Spleen (tissue), 13 donors: ENCODE measurements at regions of chr14 and their contacts with region 1.

Region 1: DNA sequence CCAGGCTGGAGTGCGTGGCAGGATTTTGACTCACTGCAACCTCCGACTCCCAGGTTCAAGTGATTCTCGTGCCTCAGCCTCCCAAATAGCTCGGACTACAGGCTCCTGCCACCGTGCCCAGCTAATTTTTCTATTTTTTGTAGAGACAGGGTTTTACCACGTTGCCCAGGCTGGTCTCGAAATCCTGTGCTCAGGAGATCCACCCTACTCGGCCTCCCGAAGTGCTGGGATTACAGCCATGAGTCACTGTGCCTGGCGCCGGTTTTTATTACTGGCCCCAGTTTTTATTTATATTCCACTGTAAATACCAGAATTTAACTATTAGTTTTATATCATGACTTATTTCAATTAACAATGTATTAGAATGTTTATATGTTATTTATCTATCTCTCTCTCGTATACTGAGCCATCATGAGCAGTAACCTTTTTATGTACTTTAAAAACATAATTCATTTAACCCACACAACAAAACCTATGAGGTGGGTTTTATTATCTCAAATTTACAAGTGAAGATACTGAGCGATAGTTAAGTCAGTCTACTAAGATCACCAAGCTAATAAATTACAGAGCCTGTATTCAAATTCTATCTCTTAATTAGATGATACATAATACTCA is 47.8 kb downstream of the HECTD1 start:
- DNase-seq: no peak
- H3K4me3 ChIP-seq: no peak overlapping the region
- H3K27ac ChIP-seq: no peak overlapping the region
- H3K4me1 ChIP-seq: no peaks in the 10 kb centered on the region
- H3K27me3 ChIP-seq: no peaks in the 10 kb centered on the region
- CTCF ChIP-seq: no peak
- POLR2A ChIP-seq: no peak

Region 2: GRCh38 chr14:31106768-31107167 is 53.0 kb before region 1 on chr14:
- intact Hi-C with region 1: loop called (anchors 10 kb)
- DNase-seq: no peak
- H3K4me3 ChIP-seq: no peak overlapping the region
- H3K27ac ChIP-seq: no peak overlapping the region
- H3K4me1 ChIP-seq: no peaks in the 10 kb centered on the region
- H3K27me3 ChIP-seq: no peaks in the 10 kb centered on the region
- CTCF ChIP-seq: no peak
- POLR2A ChIP-seq: no peak